ENCODE measurements at regions of chr16 and their contacts with region 1.

Region 1: DNA sequence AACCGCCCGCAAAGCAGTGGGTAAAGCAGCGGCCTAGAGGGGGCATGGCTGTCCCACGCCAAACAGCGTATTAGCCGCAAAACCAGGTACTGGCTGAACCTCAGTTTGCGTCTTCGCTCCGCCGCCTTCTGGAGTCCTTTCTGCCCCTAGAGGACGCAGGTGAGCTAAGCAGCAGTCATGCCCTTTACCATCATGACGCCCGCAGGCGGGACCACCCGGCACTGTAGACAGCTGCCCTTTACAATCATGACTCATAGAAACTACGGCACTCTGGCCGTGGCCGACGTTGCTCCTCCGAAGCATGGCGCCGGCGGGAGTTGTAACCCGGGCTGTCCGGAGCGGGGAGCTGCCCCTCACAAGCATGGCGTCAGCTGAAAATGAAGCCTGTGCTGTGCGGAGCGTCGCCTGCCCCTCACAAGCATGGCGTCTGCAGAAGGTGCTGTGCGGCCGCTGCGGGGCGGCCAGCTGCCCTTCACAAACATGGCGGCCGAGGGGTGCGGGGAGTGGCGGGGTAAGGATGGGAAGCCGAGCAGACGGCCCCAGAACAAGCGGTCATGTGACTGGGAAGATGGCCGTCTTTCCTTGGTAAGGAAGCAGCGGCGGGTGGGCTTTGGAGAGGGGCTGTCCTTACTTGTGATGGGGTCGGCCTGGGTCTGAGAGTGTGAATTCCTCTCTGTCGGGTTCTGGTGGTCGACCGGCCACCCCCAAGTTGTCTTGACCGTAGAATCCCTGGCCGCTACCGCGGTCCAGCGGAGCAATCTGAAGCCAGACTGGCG is at the start of gene VPS35L:
- DNase-seq: peak; percentile 98
- H3K4me3 ChIP-seq: peak within 1 kb of the TSS; percentile 53 to 92 (median 70)
- H3K27ac ChIP-seq: peak within 1 kb of the TSS; percentile 65
- H3K4me1 ChIP-seq: no peaks in the 10 kb centered on the region
- H3K27me3 ChIP-seq: no peaks in the 10 kb centered on the region
- CTCF ChIP-seq: peak; percentile 74 to 78
- total RNA-seq, gene VPS35L: 35.2 to 63.1 TPM

Region 2: DNA sequence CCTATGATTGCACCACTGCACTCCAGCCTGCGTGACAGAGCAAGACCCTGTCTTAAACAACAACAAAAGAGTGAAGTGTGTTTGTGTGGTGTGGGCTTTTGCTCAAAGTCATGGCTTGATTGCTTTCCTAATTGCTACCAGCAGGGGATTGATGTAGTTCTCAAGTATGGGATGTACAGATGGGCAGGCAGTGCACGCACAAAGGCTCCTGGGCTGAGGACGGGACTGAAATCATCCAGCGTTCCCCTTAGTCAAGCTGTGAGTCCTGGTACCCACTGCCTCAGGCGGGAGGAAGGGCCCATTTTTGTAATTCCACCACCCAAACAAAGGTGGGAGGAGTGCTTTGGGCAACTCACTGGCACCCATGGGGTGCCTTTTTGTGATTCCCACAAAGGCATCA is 80.7 kb before region 1 on chr16:
- CTCF ChIA-PET with region 1: no interaction called
- dilution Hi-C with region 1: no loop called
- in situ Hi-C with region 1: no loop called
- intact Hi-C with region 1: no loop called
- DNase-seq: no peak
- H3K4me3 ChIP-seq: no peak overlapping the region
- H3K27ac ChIP-seq: no peak overlapping the region
- H3K4me1 ChIP-seq: no peaks in the 10 kb centered on the region
- H3K27me3 ChIP-seq: no peaks in the 10 kb centered on the region
- CTCF ChIP-seq: no peak

Region 3: DNA sequence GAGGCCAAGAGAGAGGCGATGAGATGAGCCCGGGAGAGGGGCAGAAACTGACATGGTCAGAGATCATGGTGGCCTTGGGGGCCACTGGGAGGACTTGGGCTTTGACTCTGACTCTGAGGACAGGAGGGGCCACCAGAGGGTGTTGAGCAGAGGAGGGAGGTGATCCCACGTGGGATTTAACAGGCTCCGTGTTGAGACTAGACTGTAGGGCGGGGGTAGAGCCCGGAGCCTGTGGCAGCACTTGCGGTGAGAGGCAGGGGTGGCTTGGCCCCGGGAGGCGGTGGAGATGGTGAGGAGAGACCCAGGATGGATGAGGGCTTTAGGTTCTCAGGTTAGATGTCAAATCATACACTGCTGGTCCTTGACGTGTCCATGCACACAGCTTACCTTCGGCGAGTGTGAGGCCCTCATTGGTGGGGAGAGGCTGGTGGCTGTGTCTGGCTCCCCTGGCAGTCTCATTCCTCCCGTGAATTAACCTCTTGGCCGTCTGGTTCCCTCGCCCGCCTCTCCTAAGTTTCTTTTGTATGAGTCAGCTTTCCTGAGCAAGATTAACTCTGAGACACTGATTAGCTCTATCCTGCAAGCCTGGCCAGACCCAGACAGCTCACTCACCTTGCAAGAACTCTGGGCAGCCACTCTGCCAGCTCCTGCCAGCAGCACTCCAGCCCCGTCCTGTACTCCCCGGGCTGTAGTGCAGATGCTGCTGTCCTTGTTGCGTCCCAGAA is 39.9 kb after region 1 on chr16:
- CTCF ChIA-PET with region 1: no interaction called
- dilution Hi-C with region 1: no loop called
- in situ Hi-C with region 1: no loop called
- intact Hi-C with region 1: loop called (anchors 2 kb)
- DNase-seq: no peak
- H3K4me3 ChIP-seq: no peak overlapping the region
- H3K27ac ChIP-seq: peak overlapping the region; percentile 2
- H3K4me1 ChIP-seq: peaks cover 16% of the 10 kb centered on the region
- H3K27me3 ChIP-seq: no peaks in the 10 kb centered on the region
- CTCF ChIP-seq: no peak

Region 4: DNA sequence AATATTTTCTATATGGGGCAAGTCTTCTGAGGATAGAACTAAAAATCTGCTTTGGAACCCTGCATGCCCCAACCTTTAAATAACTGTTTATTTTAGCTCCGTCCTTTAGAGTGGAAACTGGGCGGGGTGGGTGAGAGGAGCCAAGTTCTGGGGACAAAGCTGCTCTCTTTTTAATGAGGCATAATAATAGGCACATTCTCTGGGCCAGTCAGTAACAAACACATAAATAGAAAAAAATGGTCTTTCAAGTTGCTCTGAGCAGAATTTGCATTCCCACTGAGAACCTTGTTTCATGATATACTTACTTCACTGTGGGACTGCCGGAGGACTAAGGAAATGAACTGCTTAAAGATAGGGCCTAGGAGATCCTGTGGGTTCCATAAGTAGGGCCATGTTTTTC is 111.1 kb after region 1 on chr16:
- CTCF ChIA-PET with region 1: no interaction called
- dilution Hi-C with region 1: no loop called
- in situ Hi-C with region 1: no loop called
- intact Hi-C with region 1: no loop called
- DNase-seq: no peak
- H3K4me3 ChIP-seq: no peak overlapping the region
- H3K27ac ChIP-seq: no peak overlapping the region
- H3K4me1 ChIP-seq: no peaks in the 10 kb centered on the region
- H3K27me3 ChIP-seq: no peaks in the 10 kb centered on the region
- CTCF ChIP-seq: no peak

Region 5: DNA sequence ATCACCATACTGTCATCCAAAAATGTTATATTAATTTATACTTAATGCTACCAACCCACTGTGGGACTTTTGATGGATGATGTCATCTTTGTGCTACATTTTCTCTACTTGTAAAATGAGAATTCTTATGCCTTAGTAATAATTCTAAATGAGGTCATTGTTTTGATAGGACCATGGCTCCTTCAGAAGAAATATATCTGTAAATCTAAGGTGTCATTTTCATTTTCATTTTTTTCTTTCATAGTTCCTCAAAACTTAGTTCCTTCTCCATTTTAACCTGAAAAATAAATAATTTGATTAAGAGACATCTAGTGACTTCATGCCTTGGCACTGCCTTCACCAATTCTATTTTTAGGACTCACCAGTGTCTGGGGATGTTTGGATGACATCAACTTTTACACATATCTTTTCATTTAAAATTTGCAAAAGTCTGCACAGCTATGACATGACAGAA is 280.6 kb after region 1 on chr16:
- CTCF ChIA-PET with region 1: no interaction called
- dilution Hi-C with region 1: no loop called
- in situ Hi-C with region 1: no loop called
- intact Hi-C with region 1: no loop called
- DNase-seq: no peak
- H3K4me3 ChIP-seq: no peak overlapping the region
- H3K27ac ChIP-seq: no peak overlapping the region
- H3K4me1 ChIP-seq: peaks cover 2% of the 10 kb centered on the region
- H3K27me3 ChIP-seq: no peaks in the 10 kb centered on the region
- CTCF ChIP-seq: no peak